ENCODE measurements at regions of chr4 and their contacts with region 1.

Region 1: DNA sequence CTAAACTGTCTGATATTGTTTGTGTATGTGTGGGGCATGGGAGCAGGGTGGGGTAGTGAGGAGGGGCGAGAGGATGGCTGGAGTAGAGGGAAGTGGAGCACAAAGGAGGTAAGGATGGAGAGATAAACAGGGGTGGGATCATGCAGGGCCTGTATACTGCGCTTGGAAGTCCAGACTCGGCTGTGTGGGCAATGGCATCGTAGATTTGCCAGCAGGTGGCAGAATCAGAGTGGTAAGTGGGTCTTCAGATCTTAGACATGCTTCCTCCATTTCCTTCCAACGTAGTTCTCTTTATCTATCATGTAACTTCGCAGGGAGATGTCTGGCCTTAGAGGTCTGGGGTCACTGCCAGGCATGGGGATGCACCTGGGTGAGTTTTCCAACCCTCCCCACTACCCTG is 155.5 kb downstream of the PDGFRA start:
- DNase-seq: no peak

Region 2: GRCh38 chr4:54277691-54278090 is 106.9 kb before region 1 on chr4:
- intact Hi-C with region 1: no loop called
- DNase-seq: no peak

Region 3: GRCh38 chr4:54433686-54434085 is 49.1 kb after region 1 on chr4:
- intact Hi-C with region 1: loop called (anchors 5 kb)
- DNase-seq: no peak

Measured in cardiac septum (tissue), 1 donor.